Naive thymus-derived CD4-positive, alpha-beta T cell (primary cell): ENCODE measurements at regions of chr3 and their contacts with region 1.

Region 1: GRCh38 chr3:189148081-189148507 is 23.7 kb upstream of the TPRG1 start:
- DNase-seq: peak; percentile 22 to 61 (median 51)
- ATAC-seq: peak; percentile 85
- H3K4me3 ChIP-seq: no peak overlapping the region
- H3K4me3 Mint-ChIP-seq: no peak overlapping the region
- H3K27ac ChIP-seq: no peak overlapping the region
- H3K27ac Mint-ChIP-seq: peak overlapping the region in 1 of 9 donors; percentile 21
- H3K4me1 ChIP-seq: peaks cover 0 to 16% of the 10 kb centered on the region in 2 donors
- H3K4me1 Mint-ChIP-seq: peaks cover 6 to 35% (median 8%) of the 10 kb centered on the region in 7 donors
- H3K27me3 ChIP-seq: no peaks in the 10 kb centered on the region
- H3K27me3 Mint-ChIP-seq: peaks cover 0 to 20% (median 0%) of the 10 kb centered on the region in 5 donors

Region 2: DNA sequence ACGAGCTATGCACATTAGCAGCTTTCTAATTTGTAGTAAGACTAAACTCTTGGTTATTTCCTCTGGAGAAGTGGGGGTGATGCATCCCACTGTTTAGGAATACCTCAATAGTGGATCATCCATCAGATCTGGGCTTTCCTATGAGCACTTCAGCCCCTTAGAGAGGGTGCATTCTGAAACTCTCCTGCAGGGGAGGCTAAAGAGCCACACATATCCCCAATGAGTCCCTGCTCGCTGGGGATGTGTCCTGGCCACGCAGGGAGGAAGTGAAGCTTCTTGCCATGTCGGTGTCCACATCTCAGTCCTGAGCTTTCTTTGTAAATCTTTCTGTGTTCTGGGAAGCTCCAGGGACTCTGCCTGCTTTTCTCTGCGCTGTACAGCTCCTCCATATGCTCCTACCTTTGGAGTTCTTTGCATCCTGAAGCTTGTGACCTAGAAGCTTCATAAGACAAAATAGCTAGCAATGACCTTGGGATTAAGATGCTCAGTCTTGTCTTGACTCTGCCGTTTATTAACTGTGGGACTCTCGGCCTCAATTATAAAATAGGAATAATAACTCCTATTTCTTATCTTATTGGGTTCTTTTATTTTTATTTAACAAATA is 1828.3 kb before region 1 on chr3:
- CTCF ChIA-PET with region 1: no interaction called
- POLR2A ChIA-PET with region 1: no interaction called
- intact Hi-C with region 1: loop called in 1 of 2 experiments (anchors 1 kb)
- DNase-seq: peak in 8 of 9 donors; percentile 22 to 56 (median 29)
- ATAC-seq: peak; percentile 82
- H3K4me3 ChIP-seq: no peak overlapping the region
- H3K4me3 Mint-ChIP-seq: peak overlapping the region in 5 of 10 donors; percentile 16 to 59 (median 31)
- H3K27ac ChIP-seq: no peak overlapping the region
- H3K27ac Mint-ChIP-seq: no peak overlapping the region
- H3K4me1 ChIP-seq: peaks cover 5 to 8% of the 10 kb centered on the region in 2 donors
- H3K4me1 Mint-ChIP-seq: peaks cover 5 to 15% (median 13%) of the 10 kb centered on the region in 7 donors
- H3K27me3 ChIP-seq: no peaks in the 10 kb centered on the region
- H3K27me3 Mint-ChIP-seq: peaks cover 31 to 38% (median 34%) of the 10 kb centered on the region in 5 donors

Region 3: GRCh38 chr3:188584162-188584529 is 563.9 kb before region 1 on chr3:
- CTCF ChIA-PET with region 1: no interaction called
- POLR2A ChIA-PET with region 1: no interaction called
- intact Hi-C with region 1: loop called in 1 of 2 experiments (anchors 10 kb)
- DNase-seq: peak in 1 of 9 donors; percentile 22
- ATAC-seq: no peak
- H3K4me3 ChIP-seq: no peak overlapping the region
- H3K4me3 Mint-ChIP-seq: peak overlapping the region in 1 of 10 donors; percentile 40
- H3K27ac ChIP-seq: no peak overlapping the region
- H3K27ac Mint-ChIP-seq: peak overlapping the region in 2 of 9 donors; percentile 5 to 50
- H3K4me1 ChIP-seq: no peaks in the 10 kb centered on the region
- H3K4me1 Mint-ChIP-seq: peaks cover 4 to 15% (median 5%) of the 10 kb centered on the region in 7 donors
- H3K27me3 ChIP-seq: no peaks in the 10 kb centered on the region
- H3K27me3 Mint-ChIP-seq: no peaks in the 10 kb centered on the region

Region 4: GRCh38 chr3:188830893-188831292 is 317.2 kb before region 1 on chr3:
- CTCF ChIA-PET with region 1: no interaction called
- POLR2A ChIA-PET with region 1: no interaction called
- intact Hi-C with region 1: loop called in 1 of 2 experiments (anchors 1 kb)
- DNase-seq: no peak
- ATAC-seq: peak; percentile 59
- H3K4me3 ChIP-seq: no peak overlapping the region
- H3K4me3 Mint-ChIP-seq: no peak overlapping the region
- H3K27ac ChIP-seq: no peak overlapping the region
- H3K27ac Mint-ChIP-seq: no peak overlapping the region
- H3K4me1 ChIP-seq: peaks cover 0 to 9% of the 10 kb centered on the region in 2 donors
- H3K4me1 Mint-ChIP-seq: peaks cover 6 to 24% (median 18%) of the 10 kb centered on the region in 7 donors
- H3K27me3 ChIP-seq: no peaks in the 10 kb centered on the region
- H3K27me3 Mint-ChIP-seq: no peaks in the 10 kb centered on the region

Region 5: GRCh38 chr3:189103003-189103599 is 45.0 kb before region 1 on chr3:
- CTCF ChIA-PET with region 1: no interaction called
- POLR2A ChIA-PET with region 1: no interaction called
- intact Hi-C with region 1: no loop called
- DNase-seq: no peak
- ATAC-seq: no peak
- H3K4me3 ChIP-seq: no peak overlapping the region
- H3K4me3 Mint-ChIP-seq: no peak overlapping the region
- H3K27ac ChIP-seq: no peak overlapping the region
- H3K27ac Mint-ChIP-seq: no peak overlapping the region
- H3K4me1 ChIP-seq: no peaks in the 10 kb centered on the region
- H3K4me1 Mint-ChIP-seq: peaks cover 0 to under 1% (median 0%) of the 10 kb centered on the region in 7 donors
- H3K27me3 ChIP-seq: no peaks in the 10 kb centered on the region
- H3K27me3 Mint-ChIP-seq: peaks cover 0 to 41% (median 5%) of the 10 kb centered on the region in 5 donors

Region 6: DNA sequence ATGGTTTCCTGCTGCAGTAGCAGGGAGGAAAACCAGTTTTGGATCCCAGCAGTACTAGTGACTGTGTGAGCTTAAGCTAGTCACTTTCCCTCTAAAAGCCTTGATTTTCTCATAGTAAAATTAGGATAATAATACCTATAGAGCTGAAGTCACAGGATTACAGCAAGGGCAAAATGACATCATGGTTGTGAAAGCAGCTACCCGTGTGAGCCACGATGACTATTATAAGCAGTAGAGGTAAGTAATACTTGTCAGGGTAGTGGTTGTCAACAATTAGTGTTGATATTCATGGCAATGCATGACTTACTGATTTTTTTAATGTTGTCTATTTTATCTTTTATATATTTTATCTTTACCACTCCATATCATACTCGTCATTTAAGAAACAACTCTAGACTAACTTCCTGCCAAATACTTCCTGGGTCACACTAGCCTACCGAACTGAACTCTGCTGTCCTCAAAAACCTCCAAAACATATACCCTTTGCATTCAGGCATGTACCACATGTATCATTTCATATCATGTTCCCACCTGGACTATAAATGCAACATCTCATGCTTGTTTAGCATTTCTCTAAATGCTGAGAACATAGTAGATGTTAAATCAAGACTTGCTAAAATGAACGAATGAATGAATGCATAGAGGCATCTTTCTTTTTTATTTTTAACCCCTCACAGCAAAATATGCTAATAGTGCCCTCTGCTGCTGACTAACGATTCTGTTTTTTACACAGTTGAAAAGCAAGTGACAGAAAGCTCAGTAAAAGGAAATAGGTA is 800.0 kb after region 1 on chr3:
- CTCF ChIA-PET with region 1: no interaction called
- POLR2A ChIA-PET with region 1: no interaction called
- intact Hi-C with region 1: loop called (anchors 1 kb)
- DNase-seq: peak in 5 of 9 donors; percentile 17 to 43 (median 30)
- ATAC-seq: no peak
- H3K4me3 ChIP-seq: no peak overlapping the region
- H3K4me3 Mint-ChIP-seq: peak overlapping the region in 1 of 10 donors; percentile 34
- H3K27ac ChIP-seq: no peak overlapping the region
- H3K27ac Mint-ChIP-seq: peak overlapping the region in 2 of 9 donors; percentile 0 to 12
- H3K4me1 ChIP-seq: no peaks in the 10 kb centered on the region
- H3K4me1 Mint-ChIP-seq: peaks cover 0 to 12% (median 4%) of the 10 kb centered on the region in 7 donors
- H3K27me3 ChIP-seq: no peaks in the 10 kb centered on the region
- H3K27me3 Mint-ChIP-seq: peaks cover 0 to 13% (median 6%) of the 10 kb centered on the region in 5 donors